Mammary epithelial cell (primary cell): ENCODE measurements at regions of chr20 and their contacts with region 1.

Region 1: GRCh38 chr20:33443512-33444239 is at the start of gene SNTA1:
- DNase-seq: peak; percentile 73
- H3K4me3 ChIP-seq: peak within 1 kb of the TSS; percentile 44 to 84 (median 59)
- H3K27ac ChIP-seq: peak within 1 kb of the TSS; percentile 2
- H3K4me1 ChIP-seq: peaks cover 8% of the 10 kb centered on the region
- H3K27me3 ChIP-seq: no peaks in the 10 kb centered on the region
- CTCF ChIP-seq: no peak
- total RNA-seq, gene SNTA1: 9.4 to 11.7 TPM

Region 2: GRCh38 chr20:32894026-32894483 is 549.6 kb before region 1 on chr20:
- CTCF ChIA-PET with region 1: no interaction called
- dilution Hi-C with region 1: no loop called
- in situ Hi-C with region 1: no loop called
- intact Hi-C with region 1: loop called (anchors 10 kb)
- DNase-seq: no peak
- H3K4me3 ChIP-seq: no peak overlapping the region
- H3K27ac ChIP-seq: no peak overlapping the region
- H3K4me1 ChIP-seq: peaks cover 3% of the 10 kb centered on the region
- H3K27me3 ChIP-seq: no peaks in the 10 kb centered on the region
- CTCF ChIP-seq: peak; percentile 47 to 71

Region 3: GRCh38 chr20:33401184-33401920 is 42.3 kb before region 1 on chr20 and contains the start of gene CDK5RAP1:
- CTCF ChIA-PET with region 1: interaction called, 4 read pairs
- dilution Hi-C with region 1: no loop called
- in situ Hi-C with region 1: no loop called
- intact Hi-C with region 1: loop called (anchors 2 kb)
- DNase-seq: peak; percentile 83
- H3K4me3 ChIP-seq: peak within 1 kb of the TSS; percentile 76 to 91 (median 80)
- H3K27ac ChIP-seq: peak within 1 kb of the TSS; percentile 42
- H3K4me1 ChIP-seq: peaks cover 26% of the 10 kb centered on the region
- H3K27me3 ChIP-seq: no peaks in the 10 kb centered on the region
- CTCF ChIP-seq: no peak
- total RNA-seq, gene CDK5RAP1: 20.7 to 35.5 TPM

Region 4: GRCh38 chr20:33674295-33675135 is 230.8 kb after region 1 on chr20 and contains the start of gene NECAB3:
- CTCF ChIA-PET with region 1: no interaction called
- dilution Hi-C with region 1: loop called (anchors 5 kb)
- in situ Hi-C with region 1: no loop called
- intact Hi-C with region 1: no loop called
- DNase-seq: peak; percentile 47
- H3K4me3 ChIP-seq: peak within 1 kb of the TSS; percentile 46 to 59 (median 50)
- H3K27ac ChIP-seq: peak within 1 kb of the TSS; percentile 7
- H3K4me1 ChIP-seq: peaks cover 12% of the 10 kb centered on the region
- H3K27me3 ChIP-seq: no peaks in the 10 kb centered on the region
- CTCF ChIP-seq: no peak
- total RNA-seq, gene NECAB3: 14.6 to 14.7 TPM

Region 5: GRCh38 chr20:33789109-33789854 is 345.6 kb after region 1 on chr20:
- CTCF ChIA-PET with region 1: interaction called, 17 read pairs
- dilution Hi-C with region 1: no loop called
- in situ Hi-C with region 1: no loop called
- intact Hi-C with region 1: no loop called
- DNase-seq: peak; percentile 98
- H3K4me3 ChIP-seq: no peak overlapping the region
- H3K27ac ChIP-seq: no peak overlapping the region
- H3K4me1 ChIP-seq: peaks cover 27% of the 10 kb centered on the region
- H3K27me3 ChIP-seq: no peaks in the 10 kb centered on the region
- CTCF ChIP-seq: no peak